Activated CD4-positive, alpha-beta memory T cell treated with anti-CD3 and anti-CD28 coated beads, Interleukin-2, amount 10 ng/mL, durations not matched to agents 7 days and 5 days (primary cell): ENCODE measurements at regions of chr5 and their contacts with region 1.

Region 1: GRCh38 chr5:95835682-95836385 is 13.3 kb upstream of the GLRX start:
- DNase-seq: no peak
- H3K4me3 Mint-ChIP-seq: peak overlapping the region; percentile 83
- H3K27ac Mint-ChIP-seq: peak overlapping the region; percentile 89
- H3K4me1 Mint-ChIP-seq: peaks cover 44% of the 10 kb centered on the region
- H3K27me3 Mint-ChIP-seq: no peaks in the 10 kb centered on the region

Region 2: DNA sequence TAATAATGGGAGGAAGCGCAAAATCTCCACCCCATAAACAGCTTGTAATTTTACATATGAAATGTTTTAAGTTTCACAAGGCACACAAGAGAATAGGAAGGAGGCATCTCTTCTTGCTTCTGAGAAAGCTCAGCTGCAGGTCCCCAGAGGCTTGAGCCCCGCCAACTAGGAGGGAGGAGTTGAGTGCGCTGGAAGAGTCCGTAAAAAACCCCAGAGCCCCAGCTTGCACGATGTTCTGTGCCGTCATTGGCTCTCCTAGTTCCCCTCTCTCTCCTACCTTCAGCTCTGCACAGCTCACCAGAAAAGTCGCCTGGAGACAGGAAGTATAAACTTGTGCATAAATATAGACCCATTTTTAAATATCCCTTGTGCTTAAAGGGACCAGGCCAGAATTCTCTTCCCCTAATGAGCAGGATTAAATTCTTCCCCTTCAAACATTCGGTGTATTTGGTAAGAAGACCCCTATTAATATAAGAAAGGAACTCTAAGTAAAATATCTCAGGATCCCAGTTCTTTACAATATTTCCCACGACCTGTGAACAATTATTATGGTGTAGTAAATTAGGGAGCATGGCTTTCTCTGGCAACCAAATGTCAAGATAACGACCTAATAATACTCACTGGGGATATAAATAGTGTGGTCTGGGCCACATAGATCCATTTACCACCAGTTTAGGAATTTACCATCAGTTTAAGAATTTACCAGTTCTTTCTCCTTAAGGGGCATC is 27.0 kb before region 1 on chr5:
- CTCF ChIA-PET with region 1: interaction called, 9 read pairs
- POLR2A ChIA-PET with region 1: interaction called, 19 read pairs
- DNase-seq: peak; percentile 81
- H3K4me3 Mint-ChIP-seq: peak overlapping the region; percentile 50
- H3K27ac Mint-ChIP-seq: peak overlapping the region; percentile 78
- H3K4me1 Mint-ChIP-seq: peaks cover 60% of the 10 kb centered on the region
- H3K27me3 Mint-ChIP-seq: no peaks in the 10 kb centered on the region